CD4-positive, alpha-beta T cell (primary cell): ENCODE measurements at regions of chr15 and their contacts with region 1.

Region 1: GRCh38 chr15:67783303-67783702 is 42.0 kb upstream of the SKOR1 start:
- DNase-seq: peak; percentile 23 to 83 (median 43)
- ATAC-seq: peak; percentile 93
- H3K4me3 ChIP-seq: no peak overlapping the region
- H3K4me3 Mint-ChIP-seq: peak overlapping the region; percentile 44
- H3K27ac ChIP-seq: no peak overlapping the region
- H3K27ac Mint-ChIP-seq: peak overlapping the region; percentile 61
- H3K4me1 ChIP-seq: peaks cover 28% of the 10 kb centered on the region
- H3K4me1 Mint-ChIP-seq: peaks cover 45% of the 10 kb centered on the region
- H3K27me3 ChIP-seq: no peaks in the 10 kb centered on the region
- H3K27me3 Mint-ChIP-seq: no peaks in the 10 kb centered on the region
- CTCF ChIP-seq: peak; percentile 43

Region 2: DNA sequence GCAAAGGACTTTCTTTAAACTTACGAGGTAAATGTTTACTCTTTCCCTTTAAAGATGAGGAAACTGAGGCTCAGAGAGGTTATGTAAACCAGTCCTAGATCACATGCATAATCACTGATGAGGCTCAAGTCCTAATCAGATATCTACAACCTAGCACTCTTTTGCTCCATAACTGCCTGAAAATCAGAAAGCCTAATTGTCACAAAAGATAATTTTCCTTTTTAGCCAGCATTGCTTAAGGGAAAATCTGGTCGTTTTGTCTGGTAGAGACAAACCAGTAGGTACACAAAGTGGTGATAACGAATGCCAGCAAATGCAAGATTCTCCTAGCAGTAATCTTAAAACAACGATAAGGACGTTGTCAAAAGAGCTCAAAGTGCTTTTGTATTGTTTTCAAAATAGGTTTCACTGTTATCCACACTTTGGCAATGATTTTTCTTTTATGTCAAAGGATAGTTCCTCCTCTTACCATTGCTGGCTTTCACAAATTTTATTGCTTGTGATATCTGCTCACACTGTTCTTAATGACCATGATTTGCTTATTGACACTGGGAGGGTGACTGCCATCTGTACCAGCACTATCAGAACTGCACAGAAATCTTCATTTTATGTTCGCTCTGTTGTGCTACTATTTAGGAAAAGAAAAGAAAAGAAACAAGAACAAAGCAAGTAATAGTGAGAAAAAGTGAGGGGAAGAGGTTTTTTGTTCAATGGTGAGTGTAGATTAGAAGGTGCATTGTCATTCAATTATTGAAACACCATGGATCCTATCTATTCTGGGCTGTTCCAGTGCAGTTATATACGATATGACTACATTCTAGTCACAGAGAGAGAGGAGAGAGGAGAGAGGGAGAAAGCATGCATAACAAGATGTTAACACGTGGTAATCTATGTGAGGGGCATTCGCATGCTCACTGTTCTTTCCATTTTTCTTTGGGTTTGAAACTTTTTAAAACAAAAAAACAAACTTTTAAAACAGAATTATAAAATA is 515.1 kb before region 1 on chr15:
- CTCF ChIA-PET with region 1: no interaction called
- POLR2A ChIA-PET with region 1: no interaction called
- intact Hi-C with region 1: no loop called
- DNase-seq: no peak
- ATAC-seq: no peak
- H3K4me3 ChIP-seq: no peak overlapping the region
- H3K4me3 Mint-ChIP-seq: no peak overlapping the region
- H3K27ac ChIP-seq: no peak overlapping the region
- H3K27ac Mint-ChIP-seq: no peak overlapping the region
- H3K4me1 ChIP-seq: no peaks in the 10 kb centered on the region
- H3K4me1 Mint-ChIP-seq: no peaks in the 10 kb centered on the region
- H3K27me3 ChIP-seq: no peaks in the 10 kb centered on the region
- H3K27me3 Mint-ChIP-seq: no peaks in the 10 kb centered on the region
- CTCF ChIP-seq: no peak

Region 3: DNA sequence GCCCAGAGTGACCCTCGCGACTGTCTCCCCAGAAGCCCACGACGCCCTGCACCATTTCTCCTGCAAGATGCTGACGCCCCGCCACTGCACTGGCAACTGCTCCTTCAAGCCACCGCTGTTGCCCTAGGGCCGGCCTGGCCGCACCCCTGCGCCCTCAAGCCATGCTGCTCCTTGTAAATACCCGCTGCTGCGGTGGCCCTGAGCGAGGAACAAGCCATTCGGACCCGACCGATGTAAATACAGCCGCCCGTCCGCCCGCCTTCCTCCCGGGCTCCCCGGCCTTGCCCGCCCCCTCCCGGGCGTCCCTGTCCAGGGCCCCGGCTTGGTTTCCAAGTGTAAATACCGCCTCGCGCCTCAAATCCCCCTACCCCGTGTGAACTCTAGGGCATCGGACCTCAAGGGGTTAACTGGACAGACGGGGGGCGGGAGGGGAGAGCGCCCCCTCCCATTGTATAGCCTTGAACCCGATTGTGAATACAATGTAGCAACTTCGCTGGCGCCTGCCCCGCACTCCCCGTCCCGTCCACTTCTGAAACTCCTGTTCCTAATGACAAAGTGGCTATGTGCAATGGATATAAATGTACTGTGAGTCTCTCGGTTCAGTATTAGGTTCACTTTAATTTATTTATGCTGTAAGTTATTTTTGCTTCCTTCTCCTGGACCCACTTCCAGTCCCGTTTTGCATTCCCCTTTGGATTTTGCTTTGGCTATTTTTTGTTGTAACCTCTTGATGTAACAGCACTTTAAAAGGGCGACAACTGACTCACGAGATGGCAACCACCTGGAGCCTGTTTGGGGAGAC is 50.6 kb after region 1 on chr15:
- CTCF ChIA-PET with region 1: interaction called, 15 read pairs
- POLR2A ChIA-PET with region 1: interaction called, 11 read pairs
- intact Hi-C with region 1: loop called (anchors 1 kb)
- DNase-seq: peak in 9 of 14 experiments; percentile 18 to 60 (median 41)
- ATAC-seq: peak; percentile 35
- H3K4me3 ChIP-seq: peak overlapping the region; percentile 59
- H3K4me3 Mint-ChIP-seq: peak overlapping the region; percentile 77
- H3K27ac ChIP-seq: no peak overlapping the region
- H3K27ac Mint-ChIP-seq: no peak overlapping the region
- H3K4me1 ChIP-seq: peaks cover 70% of the 10 kb centered on the region
- H3K4me1 Mint-ChIP-seq: peaks cover 67% of the 10 kb centered on the region
- H3K27me3 ChIP-seq: peaks cover 65 to 72% of the 10 kb centered on the region in 2 experiments
- H3K27me3 Mint-ChIP-seq: peaks cover 75% of the 10 kb centered on the region
- CTCF ChIP-seq: peak; percentile 56